Right lobe of liver (tissue), 6 donors: ENCODE measurements at regions of chr17 and their contacts with region 1.

Region 1: GRCh38 chr17:21126645-21127510 is at the start of gene DHRS7B:
- DNase-seq: peak; percentile 97 to 98 (median 98)
- ATAC-seq: peak; percentile 96 to 98 (median 96)
- H3K4me3 ChIP-seq: peak within 1 kb of the TSS; percentile 69 to 86 (median 78)
- H3K27ac ChIP-seq: peak within 1 kb of the TSS; percentile 78 to 83 (median 80)
- H3K4me1 ChIP-seq: peaks cover 0 to 10% (median 0%) of the 10 kb centered on the region in 4 donors
- H3K27me3 ChIP-seq: no peaks in the 10 kb centered on the region
- CTCF ChIP-seq: no peak
- POLR2A ChIP-seq: peak; percentile 67
- total RNA-seq, gene DHRS7B: 10.1 to 34.2 (median 14.8) TPM

Region 2: GRCh38 chr17:21252796-21253645 is 126.1 kb after region 1 on chr17 and contains the start of gene NATD1:
- intact Hi-C with region 1: loop called in 1 of 2 experiments (anchors 10 kb)
- DNase-seq: peak; percentile 89 to 92 (median 89)
- ATAC-seq: peak; percentile 81 to 91 (median 90)
- H3K4me3 ChIP-seq: peak within 1 kb of the TSS; percentile 48 to 64 (median 58)
- H3K27ac ChIP-seq: peak within 1 kb of the TSS in 2 of 3 donors; percentile 30 to 54
- H3K4me1 ChIP-seq: peaks cover 0 to 2% (median 0%) of the 10 kb centered on the region in 4 donors
- H3K27me3 ChIP-seq: no peaks in the 10 kb centered on the region
- CTCF ChIP-seq: no peak
- POLR2A ChIP-seq: peak; percentile 70
- total RNA-seq, gene NATD1: 3.3 to 5.5 (median 4.7) TPM